Aorta (tissue), 5 donors: ENCODE measurements at regions of chr7 and their contacts with region 1.

Region 1: GRCh38 chr7:124765401-124766352 is at the start of gene GPR37:
- DNase-seq: peak; percentile 73 to 86
- ATAC-seq: peak; percentile 87
- H3K4me3 ChIP-seq: peak within 1 kb of the TSS; percentile 31 to 68
- H3K27ac ChIP-seq: no peak within 1 kb of the TSS
- H3K4me1 ChIP-seq: no peaks in the 10 kb centered on the region
- H3K27me3 ChIP-seq: no peaks in the 10 kb centered on the region
- total RNA-seq, gene GPR37: 0.39 to 0.99 TPM

Region 2: DNA sequence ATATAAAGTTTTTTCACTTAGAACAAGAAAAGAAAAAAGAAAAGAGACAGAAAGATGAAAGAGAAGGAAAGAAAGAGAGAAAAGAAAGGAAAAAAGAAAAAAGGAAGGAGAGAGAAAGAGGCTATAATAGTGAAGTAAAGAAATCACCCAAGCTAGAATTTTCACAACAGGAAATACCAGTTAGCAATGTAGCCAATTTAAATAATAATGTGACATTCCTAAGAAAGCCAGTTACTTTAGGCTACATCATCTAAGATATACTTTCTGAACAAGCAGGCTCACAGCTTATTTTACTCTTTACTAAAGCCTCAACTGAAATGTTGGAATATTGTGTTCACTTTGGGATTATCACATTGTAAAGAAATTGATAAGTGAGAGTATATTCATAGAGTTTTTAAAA is 53.7 kb before region 1 on chr7:
- intact Hi-C with region 1: loop called in 1 of 2 experiments (anchors 5 kb)
- DNase-seq: no peak
- ATAC-seq: no peak
- H3K4me3 ChIP-seq: no peak overlapping the region
- H3K27ac ChIP-seq: peak overlapping the region in 1 of 2 donors; percentile 90
- H3K4me1 ChIP-seq: peaks cover 0 to 6% of the 10 kb centered on the region in 2 donors
- H3K27me3 ChIP-seq: no peaks in the 10 kb centered on the region

Region 3: GRCh38 chr7:124723012-124723411 is 42.7 kb before region 1 on chr7:
- intact Hi-C with region 1: no loop called
- DNase-seq: no peak
- ATAC-seq: no peak
- H3K4me3 ChIP-seq: no peak overlapping the region
- H3K27ac ChIP-seq: no peak overlapping the region
- H3K4me1 ChIP-seq: no peaks in the 10 kb centered on the region
- H3K27me3 ChIP-seq: no peaks in the 10 kb centered on the region